Sigmoid colon (tissue), 7 donors: ENCODE measurements at regions of chr6 and their contacts with region 1.

Region 1: GRCh38 chr6:2353412-2354137 is 108.2 kb upstream of the GMDS start:
- DNase-seq: peak; percentile 71
- H3K4me3 ChIP-seq: no peak overlapping the region
- H3K27ac ChIP-seq: peak overlapping the region in 1 of 4 donors; percentile 18
- H3K4me1 ChIP-seq: peaks cover 0 to 14% (median 5%) of the 10 kb centered on the region in 4 donors
- H3K27me3 ChIP-seq: no peaks in the 10 kb centered on the region
- CTCF ChIP-seq: peak; percentile 58 to 78 (median 63)
- EP300 ChIP-seq: no peak
- POLR2A ChIP-seq: no peak

Region 2: DNA sequence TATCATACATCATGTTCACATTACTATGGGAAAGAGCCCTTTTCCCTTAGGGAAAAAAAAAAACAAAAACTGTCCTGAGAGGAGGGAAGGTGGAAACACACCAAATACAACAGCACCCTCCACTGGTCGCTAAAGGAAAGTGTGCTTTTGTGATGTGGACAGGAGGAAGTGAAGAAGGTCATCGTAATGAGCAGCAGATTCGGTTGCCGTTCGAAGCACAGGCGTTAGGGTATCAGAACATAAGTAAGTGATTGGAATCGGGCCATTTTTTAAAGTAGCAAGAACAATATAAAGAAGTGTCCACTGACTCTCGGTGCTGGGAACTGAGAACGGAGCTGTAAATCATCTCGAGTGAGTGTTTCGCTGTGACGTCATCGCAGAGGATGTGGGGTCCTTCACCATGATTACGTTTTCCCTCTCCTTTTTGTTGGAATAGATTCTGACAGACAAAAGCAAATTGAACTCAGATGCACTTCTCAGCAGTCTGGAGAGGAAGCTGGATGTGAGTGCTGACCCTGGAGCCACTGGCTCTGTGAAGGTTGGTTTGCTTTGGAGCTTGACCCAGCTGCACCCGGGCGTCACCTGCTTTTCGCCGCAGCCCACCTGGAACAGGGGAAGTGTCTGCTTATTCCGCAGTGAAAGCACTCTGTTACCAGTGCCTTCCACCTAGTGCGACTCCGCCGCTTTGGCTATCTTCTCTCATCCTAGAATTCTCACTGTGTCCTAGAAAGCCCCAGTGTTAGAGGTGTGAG is 95.4 kb after region 1 on chr6:
- intact Hi-C with region 1: loop called (anchors 5 kb)
- DNase-seq: no peak
- H3K4me3 ChIP-seq: peak overlapping the region in 2 of 4 donors; percentile 18 to 27
- H3K27ac ChIP-seq: no peak overlapping the region
- H3K4me1 ChIP-seq: peaks cover 0 to 6% (median 5%) of the 10 kb centered on the region in 4 donors
- H3K27me3 ChIP-seq: no peaks in the 10 kb centered on the region
- CTCF ChIP-seq: peak in 3 of 4 experiments; percentile 59 to 65 (median 61)
- EP300 ChIP-seq: no peak
- POLR2A ChIP-seq: no peak